MCF 10A (cell line): ENCODE measurements at regions of chr5 and their contacts with region 1.

Region 1: DNA sequence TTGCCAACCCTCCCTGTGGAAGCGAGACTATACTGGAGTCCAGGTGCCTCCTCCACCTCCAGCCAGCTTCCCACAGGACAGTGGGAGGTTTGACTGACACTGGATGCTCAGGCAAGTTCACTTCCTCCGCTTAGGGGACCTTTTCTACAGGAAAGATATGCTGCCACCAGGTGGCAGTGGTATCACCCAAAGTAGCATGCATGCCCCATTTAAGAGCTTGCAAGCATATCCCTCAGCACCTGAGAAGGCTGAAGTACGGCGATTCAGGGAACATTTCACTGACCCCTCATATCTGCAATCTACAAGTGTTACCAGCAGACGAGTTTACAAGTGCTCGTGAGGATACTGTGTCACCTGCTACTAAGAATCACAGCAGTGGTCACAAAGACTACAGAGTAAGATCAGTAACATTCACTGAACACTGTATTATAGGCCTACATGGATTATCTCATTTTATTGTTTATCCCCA is 75.5 kb downstream of the KLHL3 start:
- DNase-seq: peak; percentile 85
- H3K4me3 Mint-ChIP-seq: no peak overlapping the region
- H3K27ac Mint-ChIP-seq: no peak overlapping the region
- H3K4me1 Mint-ChIP-seq: no peaks in the 10 kb centered on the region
- H3K27me3 Mint-ChIP-seq: peaks cover 10% of the 10 kb centered on the region
- CTCF ChIP-seq: peak; percentile 80

Region 2: DNA sequence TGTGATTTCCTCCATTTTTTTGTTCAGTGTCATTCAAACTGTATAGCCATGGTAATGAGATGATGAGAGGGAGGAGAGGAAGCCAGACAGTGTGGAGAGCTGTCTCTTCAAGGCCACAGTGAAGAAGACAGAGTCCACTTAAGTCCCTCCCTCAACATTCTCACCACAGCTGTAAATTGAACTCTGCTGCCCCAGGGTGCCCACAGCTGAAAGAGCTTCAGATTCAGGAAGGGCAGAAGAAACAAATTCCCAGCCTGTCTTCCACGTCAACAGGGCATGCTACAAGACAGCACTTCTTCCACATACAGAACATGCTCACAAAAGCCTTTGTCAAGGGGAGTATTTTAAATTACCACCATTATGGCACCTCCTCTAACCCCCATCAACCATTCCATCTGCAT is 24.9 kb before region 1 on chr5:
- CTCF ChIA-PET with region 1: interaction called, 101 read pairs
- POLR2A ChIA-PET with region 1: interaction called, 4 read pairs
- intact Hi-C with region 1: no loop called
- DNase-seq: no peak
- H3K4me3 Mint-ChIP-seq: no peak overlapping the region
- H3K27ac Mint-ChIP-seq: no peak overlapping the region
- H3K4me1 Mint-ChIP-seq: no peaks in the 10 kb centered on the region
- H3K27me3 Mint-ChIP-seq: no peaks in the 10 kb centered on the region
- CTCF ChIP-seq: no peak

Region 3: GRCh38 chr5:137672019-137672418 is 11.6 kb after region 1 on chr5:
- CTCF ChIA-PET with region 1: interaction called, 63 read pairs
- POLR2A ChIA-PET with region 1: no interaction called
- intact Hi-C with region 1: no loop called
- DNase-seq: no peak
- H3K4me3 Mint-ChIP-seq: no peak overlapping the region
- H3K27ac Mint-ChIP-seq: no peak overlapping the region
- H3K4me1 Mint-ChIP-seq: no peaks in the 10 kb centered on the region
- H3K27me3 Mint-ChIP-seq: peaks cover 11% of the 10 kb centered on the region
- CTCF ChIP-seq: no peak

Region 4: DNA sequence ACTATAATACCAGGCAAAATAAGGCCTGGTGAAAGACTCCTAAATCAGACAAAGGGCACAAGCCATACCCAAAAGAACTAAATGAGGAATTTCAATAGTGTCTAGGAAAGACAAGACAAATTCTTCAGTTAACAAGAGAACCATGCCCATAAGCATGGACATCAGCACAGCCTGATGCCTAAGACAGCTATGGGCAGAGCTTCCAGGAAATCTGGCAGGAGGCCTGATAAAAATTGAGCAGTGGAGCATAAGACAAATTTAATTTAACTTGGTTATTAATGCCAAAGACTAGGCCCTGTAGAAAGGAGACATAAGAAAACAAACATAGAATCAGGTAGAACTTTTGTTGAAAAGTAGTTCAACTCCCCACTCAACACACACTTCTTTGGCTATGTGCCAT is 58.2 kb after region 1 on chr5:
- CTCF ChIA-PET with region 1: interaction called, 15 read pairs
- POLR2A ChIA-PET with region 1: no interaction called
- intact Hi-C with region 1: no loop called
- DNase-seq: no peak
- H3K4me3 Mint-ChIP-seq: no peak overlapping the region
- H3K27ac Mint-ChIP-seq: no peak overlapping the region
- H3K4me1 Mint-ChIP-seq: no peaks in the 10 kb centered on the region
- H3K27me3 Mint-ChIP-seq: peaks cover 21% of the 10 kb centered on the region
- CTCF ChIP-seq: no peak

Region 5: GRCh38 chr5:137754126-137754960 is 94.0 kb after region 1 on chr5 and contains the start of gene HNRNPA0:
- CTCF ChIA-PET with region 1: interaction called, 10 read pairs
- POLR2A ChIA-PET with region 1: interaction called, 4 read pairs
- intact Hi-C with region 1: no loop called
- DNase-seq: peak; percentile 98
- H3K4me3 Mint-ChIP-seq: peak within 1 kb of the TSS; percentile 87
- H3K27ac Mint-ChIP-seq: peak within 1 kb of the TSS; percentile 99
- H3K4me1 Mint-ChIP-seq: peaks cover 28% of the 10 kb centered on the region
- H3K27me3 Mint-ChIP-seq: no peaks in the 10 kb centered on the region
- CTCF ChIP-seq: no peak
- total RNA-seq, gene HNRNPA0: 30.8 and 31.8 TPM in 2 replicates